Activated CD4-positive, alpha-beta T cell treated with anti-CD3 and anti-CD28 coated beads for 36 hours (primary cell): ENCODE measurements at regions of chr3 and their contacts with region 1.

Region 1: GRCh38 chr3:60017631-60018030 is 967.8 kb upstream of the CFAP20DC start:
- DNase-seq: peak; percentile 77
- ATAC-seq: peak; percentile 88
- H3K4me3 Mint-ChIP-seq: peak overlapping the region; percentile 38
- H3K27ac Mint-ChIP-seq: peak overlapping the region; percentile 95
- H3K4me1 Mint-ChIP-seq: peaks cover 77% of the 10 kb centered on the region
- H3K27me3 Mint-ChIP-seq: no peaks in the 10 kb centered on the region

Region 2: DNA sequence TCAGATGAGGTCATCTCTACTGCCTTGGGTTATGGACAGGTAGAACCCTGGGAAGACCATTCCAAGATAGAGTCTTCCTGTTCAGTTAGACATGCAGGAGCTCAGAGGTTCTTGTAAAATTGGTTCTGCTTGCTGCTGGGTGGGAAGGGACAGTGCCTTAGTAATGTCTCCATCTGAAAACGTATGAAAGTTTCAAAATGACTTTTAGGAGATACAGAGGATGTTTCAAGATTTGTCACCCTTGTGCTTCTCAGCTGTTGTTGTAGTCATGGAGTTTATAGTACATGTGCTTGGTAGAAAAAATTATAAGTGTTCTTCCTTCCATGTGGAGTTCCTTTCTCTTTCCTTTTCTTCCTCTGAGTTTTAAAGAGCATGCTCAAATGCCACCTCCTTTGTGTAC is 82.6 kb before region 1 on chr3:
- CTCF ChIA-PET with region 1: interaction called, 3 read pairs
- POLR2A ChIA-PET with region 1: no interaction called
- intact Hi-C with region 1: loop called in 1 of 2 experiments (anchors 1 kb)
- DNase-seq: peak; percentile 38
- ATAC-seq: peak; percentile 96
- H3K4me3 Mint-ChIP-seq: peak overlapping the region; percentile 37
- H3K27ac Mint-ChIP-seq: peak overlapping the region; percentile 79
- H3K4me1 Mint-ChIP-seq: peaks cover 81% of the 10 kb centered on the region
- H3K27me3 Mint-ChIP-seq: no peaks in the 10 kb centered on the region

Region 3: GRCh38 chr3:59978979-59979378 is 38.7 kb before region 1 on chr3:
- CTCF ChIA-PET with region 1: interaction called, 4 read pairs
- POLR2A ChIA-PET with region 1: no interaction called
- intact Hi-C with region 1: loop called in 1 of 2 experiments (anchors 2 kb)
- DNase-seq: peak; percentile 55
- ATAC-seq: peak; percentile 75
- H3K4me3 Mint-ChIP-seq: peak overlapping the region; percentile 21
- H3K27ac Mint-ChIP-seq: peak overlapping the region; percentile 89
- H3K4me1 Mint-ChIP-seq: peaks cover 55% of the 10 kb centered on the region
- H3K27me3 Mint-ChIP-seq: no peaks in the 10 kb centered on the region

Region 4: DNA sequence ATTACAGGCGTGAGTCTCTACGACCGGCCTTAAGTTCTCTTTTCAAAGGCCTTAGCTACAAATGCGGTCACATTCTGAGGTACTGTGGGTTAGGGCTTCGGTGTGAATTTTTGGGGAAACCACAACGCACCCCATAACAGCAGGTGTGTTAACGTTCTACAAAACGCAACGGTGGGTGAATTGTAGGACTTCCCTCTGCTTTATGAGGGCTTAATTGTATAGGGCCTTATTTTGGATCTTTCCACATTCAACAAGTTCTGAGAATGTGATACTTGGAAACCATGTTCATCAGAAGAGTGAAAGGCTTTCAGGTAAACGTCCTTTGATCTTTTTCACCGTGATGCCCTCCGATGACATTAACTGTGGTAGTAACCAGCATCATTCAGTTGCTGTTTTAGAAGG is 30.8 kb after region 1 on chr3:
- CTCF ChIA-PET with region 1: no interaction called
- POLR2A ChIA-PET with region 1: no interaction called
- intact Hi-C with region 1: loop called (anchors 1 to 2 kb)
- DNase-seq: peak; percentile 65
- ATAC-seq: peak; percentile 76
- H3K4me3 Mint-ChIP-seq: peak overlapping the region; percentile 64
- H3K27ac Mint-ChIP-seq: peak overlapping the region; percentile 89
- H3K4me1 Mint-ChIP-seq: peaks cover 81% of the 10 kb centered on the region
- H3K27me3 Mint-ChIP-seq: no peaks in the 10 kb centered on the region

Region 5: GRCh38 chr3:60192297-60193114 is 174.9 kb after region 1 on chr3:
- CTCF ChIA-PET with region 1: no interaction called
- POLR2A ChIA-PET with region 1: no interaction called
- intact Hi-C with region 1: loop called (anchors 2 to 5 kb)
- DNase-seq: peak; percentile 61
- ATAC-seq: peak; percentile 87
- H3K4me3 Mint-ChIP-seq: no peak overlapping the region
- H3K27ac Mint-ChIP-seq: peak overlapping the region; percentile 81
- H3K4me1 Mint-ChIP-seq: peaks cover 40% of the 10 kb centered on the region
- H3K27me3 Mint-ChIP-seq: no peaks in the 10 kb centered on the region